HEK293T (cell line): ENCODE measurements at regions of chr1 and their contacts with region 1.

Region 1: DNA sequence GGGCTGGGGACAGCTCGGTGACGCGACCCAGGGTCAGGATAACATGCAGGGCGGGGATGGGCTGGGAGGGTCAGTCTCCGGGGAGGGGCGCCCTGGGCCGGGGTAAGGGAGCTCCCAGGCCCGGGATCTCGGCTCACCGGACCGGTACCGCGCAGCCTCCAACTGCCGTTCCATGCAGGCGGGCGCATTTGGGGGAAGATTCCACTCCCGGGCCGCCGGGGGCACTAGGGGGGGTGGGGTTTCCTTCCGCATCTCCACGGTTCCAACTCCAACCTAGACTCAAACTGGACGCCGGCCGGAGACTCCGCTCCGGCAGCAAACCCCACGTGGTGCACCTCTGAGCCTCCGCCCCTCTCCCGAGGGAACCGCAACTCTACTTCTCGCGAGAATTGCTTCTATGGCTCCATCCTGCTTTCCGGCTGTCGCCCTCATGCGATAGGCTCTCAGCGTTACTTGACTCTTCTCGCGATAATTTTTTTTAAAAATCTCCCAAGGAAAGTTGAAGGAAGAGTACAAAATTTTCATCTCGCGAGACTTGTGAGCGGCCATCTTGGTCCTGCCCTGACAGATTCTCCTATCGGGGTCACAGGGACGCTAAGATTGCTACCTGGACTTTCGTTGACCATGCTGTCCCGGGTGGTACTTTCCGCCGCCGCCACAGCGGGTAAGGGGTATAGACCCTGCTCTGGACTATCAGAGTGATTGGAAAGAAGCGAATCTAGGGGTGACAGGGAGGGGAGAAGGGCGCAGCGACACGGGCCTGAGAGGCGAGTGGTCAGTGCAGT is at the starts of genes ATP5PB and WDR77:
- DNase-seq: peak; percentile 100

Region 2: GRCh38 chr1:111436726-111437125 is 12.4 kb before region 1 on chr1:
- CTCF ChIA-PET with region 1: no interaction called
- POLR2A ChIA-PET with region 1: interaction called, 10 read pairs
- DNase-seq: no peak